IMR-90 (cell line): ENCODE measurements at regions of chr2 and their contacts with region 1.

Region 1: DNA sequence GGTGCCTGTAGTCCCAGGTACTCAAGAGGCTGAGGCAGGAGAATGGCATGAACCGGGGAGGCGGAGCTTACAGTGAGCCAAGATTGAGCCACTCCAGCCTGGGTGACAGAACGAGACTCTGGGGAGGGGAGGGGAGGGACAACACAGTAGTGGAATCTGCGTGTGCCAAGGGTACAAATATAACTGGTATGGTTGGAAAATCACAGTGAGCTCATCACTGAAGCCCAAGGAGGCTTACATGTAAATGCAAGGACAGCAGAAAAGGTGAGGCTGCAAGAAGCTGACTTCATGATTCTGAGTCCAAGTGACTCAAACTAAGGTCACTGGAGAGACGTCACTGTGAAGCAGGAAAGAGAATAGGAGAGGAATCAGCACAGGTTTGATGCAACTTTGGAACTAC is 9.2 kb downstream of the SEPTIN10 start:
- DNase-seq: peak; percentile 92
- ATAC-seq: peak; percentile 22; the same call in 1 of the 2 replicates
- H3K4me3 ChIP-seq: no peak overlapping the region
- H3K27ac ChIP-seq: no peak overlapping the region
- H3K4me1 ChIP-seq: peaks cover 15% of the 10 kb centered on the region
- H3K27me3 ChIP-seq: no peaks in the 10 kb centered on the region
- CTCF ChIP-seq: no peak
- POLR2A ChIP-seq: no peak
- RAD21 ChIP-seq: no peak

Region 2: DNA sequence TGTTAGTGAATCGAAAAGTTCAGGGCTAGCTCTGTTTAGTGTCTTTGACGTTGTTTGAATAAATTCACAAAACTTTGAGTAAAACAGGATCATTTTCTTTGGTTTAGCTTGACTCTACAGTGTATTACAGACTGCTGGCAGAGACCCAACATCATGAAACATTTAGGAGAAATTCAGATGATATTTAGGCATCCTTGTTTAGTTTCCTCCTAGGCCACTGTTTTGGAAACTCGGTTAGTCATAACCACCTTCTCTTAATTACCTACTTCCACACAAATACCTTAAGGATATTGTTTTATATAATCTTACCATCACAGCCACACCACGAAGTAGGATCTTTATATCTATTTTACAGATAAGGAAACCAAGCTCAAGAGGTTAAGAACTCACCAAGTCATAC is 1062.5 kb before region 1 on chr2:
- CTCF ChIA-PET with region 1: no interaction called
- POLR2A ChIA-PET with region 1: no interaction called
- dilution Hi-C with region 1: no loop called
- in situ Hi-C with region 1: no loop called
- intact Hi-C with region 1: no loop called
- DNase-seq: peak; percentile 63
- ATAC-seq: peak; percentile 73
- H3K4me3 ChIP-seq: no peak overlapping the region
- H3K27ac ChIP-seq: peak overlapping the region; percentile 45; the same call in 1 of the 2 replicates
- H3K4me1 ChIP-seq: peaks cover 12% of the 10 kb centered on the region
- H3K27me3 ChIP-seq: no peaks in the 10 kb centered on the region
- CTCF ChIP-seq: no peak
- POLR2A ChIP-seq: no peak
- RAD21 ChIP-seq: no peak

Region 3: GRCh38 chr2:109582928-109583895 is 21.4 kb before region 1 on chr2:
- CTCF ChIA-PET with region 1: no interaction called
- POLR2A ChIA-PET with region 1: no interaction called
- dilution Hi-C with region 1: no loop called
- in situ Hi-C with region 1: no loop called
- intact Hi-C with region 1: loop called (anchors 2 kb)
- DNase-seq: peak; percentile 3
- ATAC-seq: no peak
- H3K4me3 ChIP-seq: no peak overlapping the region
- H3K27ac ChIP-seq: no peak overlapping the region
- H3K4me1 ChIP-seq: peaks cover 4% of the 10 kb centered on the region
- H3K27me3 ChIP-seq: no peaks in the 10 kb centered on the region
- CTCF ChIP-seq: no peak
- POLR2A ChIP-seq: no peak
- RAD21 ChIP-seq: no peak